ENCODE measurements at regions of chr4 and their contacts with region 1.

Region 1: GRCh38 chr4:183074296-183074990 is 24.6 kb upstream of the WWC2 start:
- DNase-seq: no peak
- H3K4me3 ChIP-seq: no peak overlapping the region
- H3K27ac ChIP-seq: no peak overlapping the region
- H3K4me1 ChIP-seq: no peaks in the 10 kb centered on the region
- H3K27me3 ChIP-seq: no peaks in the 10 kb centered on the region
- CTCF ChIP-seq: no peak

Region 2: GRCh38 chr4:183142571-183143550 is 68.4 kb after region 1 on chr4:
- CTCF ChIA-PET with region 1: no interaction called
- dilution Hi-C with region 1: no loop called
- in situ Hi-C with region 1: no loop called
- intact Hi-C with region 1: loop called (anchors 2 kb)
- DNase-seq: peak; percentile 78
- H3K4me3 ChIP-seq: peak overlapping the region in 1 of 3 experiments; percentile 10
- H3K27ac ChIP-seq: peak overlapping the region; percentile 27
- H3K4me1 ChIP-seq: peaks cover 42% of the 10 kb centered on the region
- H3K27me3 ChIP-seq: no peaks in the 10 kb centered on the region
- CTCF ChIP-seq: no peak

Region 3: GRCh38 chr4:183241322-183241640 is 166.8 kb after region 1 on chr4:
- CTCF ChIA-PET with region 1: no interaction called
- dilution Hi-C with region 1: no loop called
- in situ Hi-C with region 1: loop called (anchors 5 kb)
- intact Hi-C with region 1: no loop called
- DNase-seq: peak; percentile 90
- H3K4me3 ChIP-seq: no peak overlapping the region
- H3K27ac ChIP-seq: peak overlapping the region; percentile 48
- H3K4me1 ChIP-seq: peaks cover 18% of the 10 kb centered on the region
- H3K27me3 ChIP-seq: no peaks in the 10 kb centered on the region
- CTCF ChIP-seq: no peak

Region 4: GRCh38 chr4:183249857-183250256 is 175.4 kb after region 1 on chr4:
- CTCF ChIA-PET with region 1: no interaction called
- dilution Hi-C with region 1: loop called (anchors 25 kb)
- in situ Hi-C with region 1: loop called in 1 of 2 experiments (anchors 5 kb)
- intact Hi-C with region 1: loop called (anchors 1 kb)
- DNase-seq: peak; percentile 21
- H3K4me3 ChIP-seq: no peak overlapping the region
- H3K27ac ChIP-seq: no peak overlapping the region
- H3K4me1 ChIP-seq: no peaks in the 10 kb centered on the region
- H3K27me3 ChIP-seq: no peaks in the 10 kb centered on the region
- CTCF ChIP-seq: peak; percentile 28 to 53

Region 5: GRCh38 chr4:183261953-183262775 is 187.7 kb after region 1 on chr4:
- CTCF ChIA-PET with region 1: interaction called, 5 read pairs
- dilution Hi-C with region 1: loop called (anchors 25 kb)
- in situ Hi-C with region 1: no loop called
- intact Hi-C with region 1: loop called (anchors 1 kb)
- DNase-seq: peak; percentile 64
- H3K4me3 ChIP-seq: no peak overlapping the region
- H3K27ac ChIP-seq: no peak overlapping the region
- H3K4me1 ChIP-seq: no peaks in the 10 kb centered on the region
- H3K27me3 ChIP-seq: no peaks in the 10 kb centered on the region
- CTCF ChIP-seq: peak; percentile 85 to 92

Region 6: DNA sequence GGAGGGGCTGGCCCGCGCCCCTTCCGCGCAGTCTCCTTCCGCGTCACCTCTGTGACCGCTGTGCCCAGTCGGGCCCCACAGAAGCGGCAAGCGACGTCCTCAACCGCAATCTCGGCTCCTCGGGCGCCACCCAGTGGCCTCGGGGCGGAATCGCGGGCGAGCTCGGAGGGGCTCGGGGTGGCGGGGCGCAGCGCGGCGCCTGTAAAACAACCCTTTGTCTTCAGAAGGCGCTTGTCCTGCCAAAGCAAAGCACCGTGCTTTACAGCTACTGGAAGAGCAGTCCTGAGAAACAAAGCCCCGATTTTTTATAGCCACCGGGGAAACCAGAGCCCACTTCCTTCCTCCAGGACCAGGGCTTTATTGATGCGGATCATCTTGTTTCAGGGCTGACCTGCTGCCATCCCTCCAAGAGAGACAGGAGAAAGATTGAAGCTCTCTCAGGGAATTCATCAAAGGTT is 332.7 kb after region 1 on chr4:
- CTCF ChIA-PET with region 1: no interaction called
- dilution Hi-C with region 1: no loop called
- in situ Hi-C with region 1: loop called in 1 of 2 experiments (anchors 25 kb)
- intact Hi-C with region 1: loop called (anchors 1 kb)
- DNase-seq: peak; percentile 63
- H3K4me3 ChIP-seq: peak overlapping the region; percentile 44 to 54 (median 47)
- H3K27ac ChIP-seq: no peak overlapping the region
- H3K4me1 ChIP-seq: no peaks in the 10 kb centered on the region
- H3K27me3 ChIP-seq: no peaks in the 10 kb centered on the region
- CTCF ChIP-seq: peak; percentile 64 to 94

Measured in mammary epithelial cell (primary cell).